Mucosa of descending colon (tissue), 3 donors: ENCODE measurements at regions of chr15 and their contacts with region 1.

Region 1: GRCh38 chr15:68252925-68253534 is 23.5 kb upstream of the CLN6 start:
- DNase-seq: peak in 1 of 3 donors; percentile 70
- ATAC-seq: peak; percentile 61
- H3K4me3 ChIP-seq: no peak overlapping the region
- H3K4me1 ChIP-seq: peaks cover 3% of the 10 kb centered on the region
- CTCF ChIP-seq: peak; percentile 78

Region 2: GRCh38 chr15:68304589-68305337 is 51.7 kb after region 1 on chr15:
- intact Hi-C with region 1: loop called in 1 of 2 experiments (anchors 5 kb)
- DNase-seq: peak in 1 of 3 donors; percentile 33
- ATAC-seq: no peak
- H3K4me3 ChIP-seq: no peak overlapping the region
- H3K4me1 ChIP-seq: peaks cover 12% of the 10 kb centered on the region
- CTCF ChIP-seq: no peak

Region 3: GRCh38 chr15:68566377-68566954 is 313.4 kb after region 1 on chr15:
- intact Hi-C with region 1: no loop called
- DNase-seq: no peak
- ATAC-seq: no peak
- H3K4me3 ChIP-seq: no peak overlapping the region
- H3K4me1 ChIP-seq: no peaks in the 10 kb centered on the region
- CTCF ChIP-seq: no peak